ENCODE measurements at regions of chr3 and their contacts with region 1.

Region 1: GRCh38 chr3:151599103-151599672 is 134.5 kb upstream of the AADACL2 start:
- DNase-seq: no peak
- H3K4me3 ChIP-seq: no peak overlapping the region
- H3K27ac ChIP-seq: no peak overlapping the region
- H3K4me1 ChIP-seq: no peaks in the 10 kb centered on the region
- H3K27me3 ChIP-seq: no peaks in the 10 kb centered on the region
- CTCF ChIP-seq: no peak

Region 2: DNA sequence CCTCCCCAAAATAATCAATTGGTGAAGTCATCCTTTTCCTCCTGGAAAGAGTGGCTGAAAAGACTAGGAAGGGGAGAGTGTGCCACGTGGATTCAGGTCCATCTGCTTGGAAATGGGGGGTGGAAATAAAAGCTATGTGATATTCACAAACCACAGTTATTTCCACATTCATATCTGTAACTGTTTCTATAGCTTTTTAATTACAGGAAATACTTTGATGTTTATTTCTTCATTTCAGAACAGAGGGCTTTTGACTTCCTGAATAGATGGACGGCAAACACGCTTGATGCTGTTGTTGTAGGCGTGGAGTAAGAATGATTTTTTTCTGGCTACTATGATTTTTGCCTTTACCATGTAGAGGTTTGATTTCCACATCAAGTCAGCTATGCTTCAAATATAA is 144.7 kb after region 1 on chr3:
- CTCF ChIA-PET with region 1: no interaction called
- POLR2A ChIA-PET with region 1: interaction called, 12 read pairs
- intact Hi-C with region 1: no loop called
- DNase-seq: no peak
- H3K4me3 ChIP-seq: no peak overlapping the region
- H3K27ac ChIP-seq: no peak overlapping the region
- H3K4me1 ChIP-seq: no peaks in the 10 kb centered on the region
- H3K27me3 ChIP-seq: no peaks in the 10 kb centered on the region
- CTCF ChIP-seq: no peak